ENCODE measurements at regions of chr19 and their contacts with region 1.

Region 1: DNA sequence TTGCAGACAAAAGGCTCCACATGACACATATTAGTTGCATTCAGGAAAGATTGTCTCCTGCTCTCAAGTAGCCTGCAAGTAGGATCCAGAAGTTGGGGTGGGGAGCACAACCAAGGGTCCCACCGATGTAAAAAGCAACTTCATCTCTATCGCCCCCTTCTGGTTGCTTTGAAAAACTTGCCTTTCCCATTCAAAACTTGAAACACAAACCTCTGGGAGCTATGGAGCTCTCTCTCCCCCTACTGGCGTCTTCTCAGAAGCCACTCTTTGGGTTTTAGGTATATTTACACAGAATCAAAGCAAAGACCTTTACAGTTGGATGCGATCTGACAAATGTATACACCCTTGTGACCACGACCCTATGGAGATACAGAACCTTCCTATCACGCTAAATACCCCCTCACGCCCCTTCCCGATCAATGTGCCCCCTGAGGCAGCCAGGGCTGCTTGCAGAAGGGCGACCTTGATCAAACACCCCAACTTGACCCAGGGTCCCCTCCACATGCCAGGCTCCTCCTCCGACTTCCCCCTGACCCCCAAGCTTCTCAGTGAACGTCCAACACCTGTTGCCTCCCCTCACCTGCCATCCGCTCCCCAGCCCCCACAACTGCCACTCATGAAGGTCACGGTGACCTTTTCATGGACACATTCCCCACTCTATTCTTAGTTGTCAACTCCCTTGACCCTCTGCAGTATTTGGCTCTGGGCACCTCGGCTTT is 10.1 kb downstream of the NOSIP start:
- DNase-seq: peak; percentile 82 to 85 (median 84)
- H3K4me3 ChIP-seq: no peak overlapping the region
- H3K4me3 Mint-ChIP-seq: peak overlapping the region; percentile 68 to 91 (median 78)
- H3K27ac ChIP-seq: no peak overlapping the region
- H3K27ac Mint-ChIP-seq: peak overlapping the region; percentile 90 to 98 (median 95)
- H3K4me1 ChIP-seq: peaks cover 64% of the 10 kb centered on the region
- H3K4me1 Mint-ChIP-seq: peaks cover 34 to 64% (median 47%) of the 10 kb centered on the region in 4 donors
- H3K27me3 ChIP-seq: no peaks in the 10 kb centered on the region
- H3K27me3 Mint-ChIP-seq: no peaks in the 10 kb centered on the region

Region 2: GRCh38 chr19:49468746-49469447 is 101.4 kb before region 1 on chr19:
- CTCF ChIA-PET with region 1: interaction called, 17 read pairs
- POLR2A ChIA-PET with region 1: interaction called, 13 read pairs
- intact Hi-C with region 1: loop called (anchors 1 kb)
- DNase-seq: peak; percentile 96 to 99 (median 98)
- H3K4me3 ChIP-seq: peak overlapping the region in 1 of 2 donors; percentile 44
- H3K4me3 Mint-ChIP-seq: peak overlapping the region; percentile 67 to 94 (median 80)
- H3K27ac ChIP-seq: peak overlapping the region; percentile 84
- H3K27ac Mint-ChIP-seq: peak overlapping the region; percentile 94 to 100 (median 100)
- H3K4me1 ChIP-seq: peaks cover 71% of the 10 kb centered on the region
- H3K4me1 Mint-ChIP-seq: peaks cover 24 to 61% (median 40%) of the 10 kb centered on the region in 4 donors
- H3K27me3 ChIP-seq: no peaks in the 10 kb centered on the region
- H3K27me3 Mint-ChIP-seq: no peaks in the 10 kb centered on the region

Region 3: DNA sequence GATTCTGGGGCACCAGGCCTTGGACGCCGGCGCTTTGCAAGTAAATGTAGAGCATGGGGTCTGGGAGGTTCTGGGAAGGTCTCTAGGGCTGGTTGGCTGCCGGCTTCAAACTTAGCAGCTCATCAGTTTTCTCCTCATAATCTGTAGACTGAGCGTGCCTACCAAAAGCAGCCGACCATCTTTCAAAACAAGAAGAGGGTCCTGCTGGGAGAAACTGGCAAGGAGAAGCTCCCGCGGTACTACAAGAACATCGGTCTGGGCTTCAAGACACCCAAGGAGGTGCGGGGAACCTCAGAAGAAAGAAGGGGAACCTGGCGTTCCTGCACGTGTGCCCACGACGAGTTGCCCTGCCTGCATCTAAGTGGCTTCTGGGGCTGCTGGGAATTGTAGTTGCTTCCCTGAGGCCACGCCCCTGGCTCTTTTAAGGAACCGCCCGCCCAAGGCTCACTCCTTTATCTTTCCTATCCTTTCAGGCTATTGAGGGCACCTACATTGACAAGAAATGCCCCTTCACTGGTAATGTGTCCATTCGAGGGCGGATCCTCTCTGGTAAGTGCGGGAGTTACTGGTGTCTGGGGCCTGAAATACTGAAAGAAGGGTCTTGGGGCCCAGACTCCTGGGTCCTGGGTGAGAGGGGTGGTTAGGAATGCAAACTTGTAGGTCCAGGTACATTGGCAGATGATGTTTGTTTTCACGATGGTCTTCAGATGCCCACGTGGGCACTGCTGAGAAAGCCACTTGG is 73.1 kb before region 1 on chr19:
- CTCF ChIA-PET with region 1: interaction called, 11 read pairs
- POLR2A ChIA-PET with region 1: interaction called, 5 read pairs
- intact Hi-C with region 1: no loop called
- DNase-seq: peak; percentile 79 to 89 (median 83)
- H3K4me3 ChIP-seq: peak overlapping the region; percentile 92 to 99
- H3K4me3 Mint-ChIP-seq: peak overlapping the region; percentile 99 to 100 (median 100)
- H3K27ac ChIP-seq: peak overlapping the region; percentile 95
- H3K27ac Mint-ChIP-seq: peak overlapping the region; percentile 95 to 100 (median 99)
- H3K4me1 ChIP-seq: peaks cover 55% of the 10 kb centered on the region
- H3K4me1 Mint-ChIP-seq: peaks cover 23 to 87% (median 43%) of the 10 kb centered on the region in 4 donors
- H3K27me3 ChIP-seq: no peaks in the 10 kb centered on the region
- H3K27me3 Mint-ChIP-seq: no peaks in the 10 kb centered on the region

Region 4: GRCh38 chr19:49528211-49528771 is 42.0 kb before region 1 on chr19:
- CTCF ChIA-PET with region 1: interaction called, 43 read pairs
- POLR2A ChIA-PET with region 1: interaction called, 21 read pairs
- intact Hi-C with region 1: no loop called
- DNase-seq: no peak
- H3K4me3 ChIP-seq: peak overlapping the region; percentile 48 to 56
- H3K4me3 Mint-ChIP-seq: peak overlapping the region; percentile 42 to 87 (median 80)
- H3K27ac ChIP-seq: no peak overlapping the region
- H3K27ac Mint-ChIP-seq: peak overlapping the region in 4 of 7 donors; percentile 31 to 82 (median 51)
- H3K4me1 ChIP-seq: peaks cover 19% of the 10 kb centered on the region
- H3K4me1 Mint-ChIP-seq: peaks cover 11 to 33% (median 19%) of the 10 kb centered on the region in 4 donors
- H3K27me3 ChIP-seq: no peaks in the 10 kb centered on the region
- H3K27me3 Mint-ChIP-seq: no peaks in the 10 kb centered on the region

Region 5: DNA sequence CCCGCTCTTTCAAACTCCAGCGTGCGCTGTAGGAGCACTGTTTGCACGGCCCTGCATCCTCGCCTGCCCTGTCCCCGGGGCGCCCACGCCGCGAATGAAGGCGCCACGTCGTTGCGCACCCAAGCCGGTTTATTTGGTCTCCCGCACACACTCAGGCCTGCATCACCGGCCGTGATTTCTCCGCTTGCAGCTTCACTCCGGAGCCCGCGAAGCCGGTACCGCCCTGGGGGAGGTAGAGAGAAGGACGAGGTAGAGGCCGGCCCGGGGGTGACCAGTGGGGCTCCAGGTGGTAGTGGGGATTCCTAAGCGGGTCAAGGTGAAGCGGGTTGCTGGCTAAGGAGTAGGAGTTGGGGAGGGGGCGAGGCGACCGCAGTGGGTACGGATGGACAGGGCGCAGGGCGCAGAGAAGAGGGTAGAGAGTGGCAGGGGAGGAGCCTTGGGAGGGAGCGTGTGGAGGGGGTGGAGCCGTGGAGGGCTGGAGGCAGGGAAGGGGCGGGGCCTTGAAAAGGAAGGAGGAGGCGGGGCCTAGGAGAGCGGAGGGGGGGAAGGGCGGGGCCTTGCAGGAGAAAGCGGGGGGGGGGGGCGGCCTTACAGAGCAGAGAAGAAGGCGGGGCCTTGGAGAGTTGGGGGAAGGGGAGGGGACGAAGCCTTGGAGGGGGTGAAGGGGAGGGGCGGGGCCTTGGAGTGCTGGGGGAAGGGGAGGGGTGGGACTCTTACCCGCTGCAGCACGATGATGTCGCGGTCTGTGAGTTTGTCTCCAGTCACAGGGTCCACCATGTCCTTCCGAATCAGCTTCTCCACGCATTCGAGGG is 14.5 kb before region 1 on chr19:
- CTCF ChIA-PET with region 1: interaction called, 299 read pairs
- POLR2A ChIA-PET with region 1: interaction called, 629 read pairs
- intact Hi-C with region 1: loop called (anchors 1 kb)
- DNase-seq: peak; percentile 82 to 87 (median 86)
- H3K4me3 ChIP-seq: peak overlapping the region in 1 of 2 donors; percentile 19
- H3K4me3 Mint-ChIP-seq: peak overlapping the region; percentile 35 to 86 (median 78)
- H3K27ac ChIP-seq: no peak overlapping the region
- H3K27ac Mint-ChIP-seq: peak overlapping the region; percentile 89 to 99 (median 97)
- H3K4me1 ChIP-seq: peaks cover 97% of the 10 kb centered on the region
- H3K4me1 Mint-ChIP-seq: peaks cover 44 to 85% (median 63%) of the 10 kb centered on the region in 4 donors
- H3K27me3 ChIP-seq: no peaks in the 10 kb centered on the region
- H3K27me3 Mint-ChIP-seq: no peaks in the 10 kb centered on the region